ENCODE measurements at regions of chr9 and their contacts with region 1.

Region 1: DNA sequence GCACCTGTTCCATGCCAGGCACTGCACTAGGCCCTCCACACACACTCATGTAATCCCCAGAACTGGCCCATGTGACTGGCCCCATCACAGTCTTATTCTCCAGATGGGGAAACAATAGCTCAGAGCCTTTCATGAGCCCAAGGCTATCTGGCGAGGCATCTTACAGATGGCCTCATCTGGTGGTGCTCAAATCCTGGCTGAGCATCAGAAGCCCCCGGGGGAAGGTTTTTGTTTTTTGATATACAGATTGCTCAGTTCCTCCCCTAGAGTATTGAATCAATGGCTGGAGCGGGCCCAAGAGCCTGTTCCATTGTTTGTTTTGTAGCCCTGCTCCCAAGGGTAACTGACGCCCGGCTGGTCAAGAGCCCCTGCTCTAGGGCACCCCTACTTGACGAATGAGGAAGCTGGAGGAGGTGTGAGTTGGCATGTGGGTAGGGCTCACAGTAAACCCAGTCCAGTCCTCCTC is 145.3 kb upstream of the RAPGEF1 start:
- DNase-seq: no peak
- ATAC-seq: no peak
- H3K4me3 ChIP-seq: no peak overlapping the region
- H3K27ac ChIP-seq: no peak overlapping the region
- H3K4me1 ChIP-seq: peaks cover 17% of the 10 kb centered on the region
- H3K27me3 ChIP-seq: no peaks in the 10 kb centered on the region
- CTCF ChIP-seq: no peak
- POLR2A ChIP-seq: no peak
- RAD21 ChIP-seq: no peak

Region 2: GRCh38 chr9:132079391-132080091 is 194.4 kb after region 1 on chr9 and contains the start of gene MED27:
- CTCF ChIA-PET with region 1: no interaction called
- POLR2A ChIA-PET with region 1: no interaction called
- dilution Hi-C with region 1: no loop called
- in situ Hi-C with region 1: no loop called
- intact Hi-C with region 1: loop called (anchors 5 kb)
- DNase-seq: peak; percentile 91
- ATAC-seq: peak; percentile 97
- H3K4me3 ChIP-seq: peak within 1 kb of the TSS; percentile 57
- H3K27ac ChIP-seq: peak within 1 kb of the TSS; percentile 60
- H3K4me1 ChIP-seq: peaks cover 6% of the 10 kb centered on the region
- H3K27me3 ChIP-seq: no peaks in the 10 kb centered on the region
- CTCF ChIP-seq: no peak
- POLR2A ChIP-seq: peak; percentile 70
- RAD21 ChIP-seq: 0 out of 2 replicates have a peak, but pooled peaks have one; percentile 4
- total RNA-seq, gene MED27: 51.9 and 63.4 TPM in 2 replicates